Transverse colon (tissue), 4 donors: ENCODE measurements at regions of chr1 and their contacts with region 1.

Region 1: GRCh38 chr1:112337028-112337531 is 58.9 kb upstream of the CTTNBP2NL start:
- DNase-seq: no peak
- H3K4me3 ChIP-seq: no peak overlapping the region
- H3K27ac ChIP-seq: no peak overlapping the region
- H3K4me1 ChIP-seq: peaks cover 0 to 7% (median 0%) of the 10 kb centered on the region in 4 donors
- H3K27me3 ChIP-seq: no peaks in the 10 kb centered on the region
- CTCF ChIP-seq: peak; percentile 34 to 53 (median 51)
- EP300 ChIP-seq: no peak
- POLR2A ChIP-seq: no peak

Region 2: GRCh38 chr1:111789666-111790316 is 547.3 kb before region 1 on chr1:
- in situ Hi-C with region 1: loop called in 1 of 4 experiments (anchors 25 kb)
- intact Hi-C with region 1: no loop called
- DNase-seq: no peak
- H3K4me3 ChIP-seq: no peak overlapping the region
- H3K27ac ChIP-seq: peak overlapping the region in 1 of 4 donors; percentile 24
- H3K4me1 ChIP-seq: no peaks in the 10 kb centered on the region
- H3K27me3 ChIP-seq: peaks cover 6% of the 10 kb centered on the region
- CTCF ChIP-seq: peak in 1 of 5 experiments; percentile 18
- EP300 ChIP-seq: no peak
- POLR2A ChIP-seq: no peak

Region 3: DNA sequence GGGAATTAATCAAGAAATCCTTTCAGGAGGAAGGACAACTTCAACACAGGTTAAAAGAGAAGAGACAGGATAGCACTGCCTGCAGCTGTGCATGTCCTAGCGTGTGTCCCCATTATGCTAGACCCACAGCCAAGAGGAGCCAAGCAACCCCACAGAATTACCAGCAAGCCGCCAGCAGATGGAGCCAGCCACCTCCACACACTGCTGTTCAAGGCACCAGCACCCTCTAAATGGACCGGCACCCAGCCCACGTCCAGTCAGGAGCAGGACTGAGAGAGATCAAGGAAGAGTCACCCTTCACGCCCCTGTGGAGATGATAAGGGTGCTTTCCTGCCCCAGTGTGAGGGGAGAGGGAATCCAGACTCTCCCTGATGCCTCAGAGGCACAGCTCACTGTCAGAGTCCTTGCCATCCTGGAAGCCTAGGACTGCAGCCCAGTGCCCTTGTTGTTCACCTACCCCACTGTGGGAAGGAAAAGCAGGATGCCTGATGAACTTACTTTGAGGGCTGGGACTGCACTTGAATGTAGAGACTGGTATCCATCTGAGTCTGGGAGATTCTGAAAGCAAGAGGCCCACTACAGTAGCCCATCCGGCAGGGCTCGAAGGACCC is 21.8 kb after region 1 on chr1:
- in situ Hi-C with region 1: no loop called
- intact Hi-C with region 1: loop called (anchors 1 kb)
- DNase-seq: peak; percentile 81
- H3K4me3 ChIP-seq: peak overlapping the region in 1 of 4 donors; percentile 29
- H3K27ac ChIP-seq: peak overlapping the region; percentile 78 to 91 (median 86)
- H3K4me1 ChIP-seq: peaks cover 17 to 32% (median 29%) of the 10 kb centered on the region in 4 donors
- H3K27me3 ChIP-seq: no peaks in the 10 kb centered on the region
- CTCF ChIP-seq: peak; percentile 68 to 78 (median 72)
- EP300 ChIP-seq: no peak
- POLR2A ChIP-seq: no peak

Region 4: GRCh38 chr1:112369392-112370285 is 32.6 kb after region 1 on chr1:
- in situ Hi-C with region 1: no loop called
- intact Hi-C with region 1: loop called (anchors 1 kb)
- DNase-seq: peak; percentile 91
- H3K4me3 ChIP-seq: no peak overlapping the region
- H3K27ac ChIP-seq: no peak overlapping the region
- H3K4me1 ChIP-seq: peaks cover 0 to 3% (median 0%) of the 10 kb centered on the region in 4 donors
- H3K27me3 ChIP-seq: peaks cover 18% of the 10 kb centered on the region
- CTCF ChIP-seq: peak; percentile 93 to 96 (median 95)
- EP300 ChIP-seq: no peak
- POLR2A ChIP-seq: no peak